Activated B cell treated with CpG ODN at 0.5 μM for 24 hours (primary cell): ENCODE measurements at regions of chr5 and their contacts with region 1.

Region 1: GRCh38 chr5:134845852-134846640 is at the start of gene C5orf24:
- DNase-seq: peak; percentile 86
- ATAC-seq: peak; percentile 92
- H3K4me3 Mint-ChIP-seq: peak within 1 kb of the TSS; percentile 83
- H3K27ac Mint-ChIP-seq: peak within 1 kb of the TSS; percentile 95
- H3K4me1 Mint-ChIP-seq: peaks cover 26% of the 10 kb centered on the region
- H3K27me3 Mint-ChIP-seq: no peaks in the 10 kb centered on the region
- CTCF ChIP-seq: no peak
- total RNA-seq, gene C5orf24: 32.0 and 36.1 TPM in 2 replicates

Region 2: DNA sequence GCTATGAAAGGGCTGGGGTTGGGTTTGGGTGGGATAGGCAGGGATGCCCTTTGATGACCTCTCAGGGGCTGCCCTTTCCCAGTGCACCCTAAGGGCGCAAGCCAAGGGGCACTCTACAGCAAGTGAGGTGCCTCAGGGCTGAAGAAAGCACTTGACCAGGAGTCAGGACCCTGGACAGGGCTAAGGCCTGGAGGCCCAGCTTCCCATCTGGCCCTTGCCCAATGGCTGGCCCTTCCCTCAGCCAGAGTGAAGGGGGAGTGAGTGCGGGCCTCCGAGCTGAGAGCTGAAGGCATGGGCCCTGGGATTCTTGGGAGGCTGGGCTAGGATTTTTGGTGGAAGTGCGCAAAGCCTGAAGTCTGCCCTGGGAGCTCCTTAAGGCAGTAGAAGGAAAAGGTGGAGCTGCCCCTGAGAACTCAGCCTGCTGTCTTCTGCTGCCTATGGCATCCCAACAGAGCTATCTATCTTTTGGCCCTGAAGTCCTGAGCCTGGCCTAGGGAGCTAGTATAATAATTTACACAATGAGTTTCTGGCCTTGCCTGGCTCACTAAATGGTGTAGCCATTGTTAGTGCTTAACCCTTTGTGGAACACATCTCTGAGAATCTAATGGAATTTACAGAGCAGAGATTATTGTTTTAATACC is 304.2 kb before region 1 on chr5:
- CTCF ChIA-PET with region 1: no interaction called
- POLR2A ChIA-PET with region 1: no interaction called
- intact Hi-C with region 1: loop called (anchors 10 kb)
- DNase-seq: no peak
- ATAC-seq: no peak
- H3K4me3 Mint-ChIP-seq: peak overlapping the region; percentile 78
- H3K27ac Mint-ChIP-seq: peak overlapping the region; percentile 96
- H3K4me1 Mint-ChIP-seq: peaks cover 86% of the 10 kb centered on the region
- H3K27me3 Mint-ChIP-seq: no peaks in the 10 kb centered on the region
- CTCF ChIP-seq: no peak

Region 3: DNA sequence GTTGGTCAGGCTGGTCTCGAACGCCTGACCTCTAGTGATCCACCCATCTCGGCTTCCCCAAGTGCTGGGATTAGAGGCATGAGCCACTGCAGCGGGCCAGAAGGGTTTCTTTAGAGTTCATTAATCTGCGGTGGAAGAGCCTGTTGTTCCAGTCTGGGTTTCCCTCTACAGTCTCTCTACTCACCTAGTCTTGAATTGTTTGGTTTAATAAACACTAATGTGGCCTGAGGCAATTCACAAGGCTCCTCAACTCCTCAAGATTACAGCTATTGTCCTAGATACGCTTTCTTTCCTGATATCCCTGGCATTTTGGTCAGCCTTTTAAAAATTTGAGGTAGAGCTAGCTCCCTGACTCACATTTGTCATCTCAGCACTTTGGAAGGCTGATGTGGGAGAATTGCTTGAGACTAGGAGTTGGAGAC is 208.9 kb before region 1 on chr5:
- CTCF ChIA-PET with region 1: no interaction called
- POLR2A ChIA-PET with region 1: no interaction called
- intact Hi-C with region 1: loop called (anchors 1 kb)
- DNase-seq: no peak
- ATAC-seq: no peak
- H3K4me3 Mint-ChIP-seq: no peak overlapping the region
- H3K27ac Mint-ChIP-seq: no peak overlapping the region
- H3K4me1 Mint-ChIP-seq: peaks cover 2% of the 10 kb centered on the region
- H3K27me3 Mint-ChIP-seq: no peaks in the 10 kb centered on the region
- CTCF ChIP-seq: no peak

Region 4: DNA sequence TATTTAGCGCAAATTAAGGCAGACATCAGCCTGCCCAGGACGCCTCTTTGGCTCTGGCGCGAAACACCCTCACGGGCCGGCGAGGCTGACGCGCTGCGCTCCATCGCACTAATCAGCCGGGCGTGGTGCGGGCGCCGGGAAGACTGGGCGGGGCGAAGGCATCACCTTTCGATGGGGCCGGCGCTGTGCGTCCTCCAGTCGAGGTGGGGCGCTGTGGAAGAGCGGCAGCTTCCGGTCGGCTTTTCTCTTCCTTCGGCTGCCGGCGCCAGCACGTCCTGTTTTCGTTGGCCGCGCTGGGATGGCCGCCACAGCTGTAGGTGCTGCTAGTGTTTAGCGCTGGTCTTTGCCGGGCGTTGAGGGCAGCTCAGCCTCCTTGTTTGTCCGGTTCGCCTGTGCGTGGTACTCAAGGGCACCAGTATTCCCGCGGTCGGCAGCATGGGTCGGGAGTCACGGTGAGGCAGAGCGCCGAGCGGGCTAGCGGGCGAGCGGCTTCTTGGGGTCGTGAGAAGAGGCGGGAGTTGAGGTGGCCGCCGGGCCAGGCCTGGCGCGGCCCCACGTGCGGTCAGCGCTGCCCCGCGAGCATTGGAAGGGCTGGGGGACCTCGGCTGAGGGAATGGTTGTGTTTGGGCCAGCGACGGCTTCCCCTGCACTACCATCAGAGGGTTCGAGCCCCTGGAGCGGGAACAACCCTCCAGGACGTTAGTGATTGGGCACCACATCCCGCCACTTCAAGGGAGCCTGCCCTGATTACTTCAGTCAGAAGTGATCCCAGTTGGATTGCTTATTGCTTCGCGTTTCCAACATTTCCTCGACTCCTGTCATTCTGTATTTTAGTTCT is 87.3 kb before region 1 on chr5 and contains the start of gene DDX46:
- CTCF ChIA-PET with region 1: no interaction called
- POLR2A ChIA-PET with region 1: interaction called, 5 read pairs
- intact Hi-C with region 1: loop called (anchors 1 kb)
- DNase-seq: peak; percentile 95
- ATAC-seq: peak; percentile 99
- H3K4me3 Mint-ChIP-seq: peak within 1 kb of the TSS; percentile 100
- H3K27ac Mint-ChIP-seq: peak within 1 kb of the TSS; percentile 94
- H3K4me1 Mint-ChIP-seq: peaks cover 36% of the 10 kb centered on the region
- H3K27me3 Mint-ChIP-seq: no peaks in the 10 kb centered on the region
- CTCF ChIP-seq: no peak
- total RNA-seq, gene DDX46: 68.8 and 74.1 TPM in 2 replicates

Region 5: DNA sequence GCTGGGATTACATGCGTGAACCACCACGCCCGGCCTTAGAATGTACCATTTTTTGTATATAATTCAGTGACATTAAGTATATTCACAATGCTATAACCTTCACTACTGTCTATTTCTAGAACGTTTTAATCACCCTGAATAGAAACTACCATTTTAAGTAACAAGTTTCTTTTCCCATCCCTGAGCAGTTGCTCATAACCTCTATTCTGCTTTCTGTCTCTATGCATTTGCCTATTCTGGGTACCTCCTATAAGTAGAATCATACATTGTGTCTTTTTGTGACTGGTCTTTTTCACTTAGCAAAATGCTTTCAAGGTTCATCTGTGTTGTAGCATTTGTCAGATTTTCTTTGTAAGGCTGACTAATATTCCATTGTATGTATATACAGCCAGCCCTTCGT is 47.6 kb before region 1 on chr5:
- CTCF ChIA-PET with region 1: no interaction called
- POLR2A ChIA-PET with region 1: no interaction called
- intact Hi-C with region 1: no loop called
- DNase-seq: no peak
- ATAC-seq: no peak
- H3K4me3 Mint-ChIP-seq: no peak overlapping the region
- H3K27ac Mint-ChIP-seq: no peak overlapping the region
- H3K4me1 Mint-ChIP-seq: no peaks in the 10 kb centered on the region
- H3K27me3 Mint-ChIP-seq: no peaks in the 10 kb centered on the region
- CTCF ChIP-seq: no peak

Region 6: GRCh38 chr5:134813407-134813806 is 32.6 kb before region 1 on chr5:
- CTCF ChIA-PET with region 1: no interaction called
- POLR2A ChIA-PET with region 1: interaction called, 3 read pairs
- intact Hi-C with region 1: loop called (anchors 5 kb)
- DNase-seq: no peak
- ATAC-seq: peak; percentile 73
- H3K4me3 Mint-ChIP-seq: peak overlapping the region; percentile 15
- H3K27ac Mint-ChIP-seq: peak overlapping the region; percentile 74
- H3K4me1 Mint-ChIP-seq: peaks cover 17% of the 10 kb centered on the region
- H3K27me3 Mint-ChIP-seq: no peaks in the 10 kb centered on the region
- CTCF ChIP-seq: no peak

Region 7: GRCh38 chr5:134873987-134874830 is 28.2 kb after region 1 on chr5 and contains the start of gene TXNDC15:
- CTCF ChIA-PET with region 1: no interaction called
- POLR2A ChIA-PET with region 1: interaction called, 42 read pairs
- intact Hi-C with region 1: loop called (anchors 1 kb)
- DNase-seq: peak; percentile 78
- ATAC-seq: peak; percentile 93
- H3K4me3 Mint-ChIP-seq: peak within 1 kb of the TSS; percentile 95
- H3K27ac Mint-ChIP-seq: peak within 1 kb of the TSS; percentile 94
- H3K4me1 Mint-ChIP-seq: peaks cover 34% of the 10 kb centered on the region
- H3K27me3 Mint-ChIP-seq: no peaks in the 10 kb centered on the region
- CTCF ChIP-seq: no peak
- total RNA-seq, gene TXNDC15: 26.6 and 30.7 TPM in 2 replicates